Activated CD8-positive, alpha-beta T cell treated with anti-CD3 and anti-CD28 coated beads, Interleukin-2, amount 10 ng/mL, durations not matched to agents 7 days and 5 days (primary cell): ENCODE measurements at regions of chr15 and their contacts with region 1.

Region 1: GRCh38 chr15:85598718-85599398 is 195.9 kb downstream of the KLHL25 start:
- DNase-seq: no peak
- ATAC-seq: no peak
- H3K4me3 Mint-ChIP-seq: no peak overlapping the region
- H3K27ac Mint-ChIP-seq: no peak overlapping the region
- H3K4me1 Mint-ChIP-seq: peaks cover 43% of the 10 kb centered on the region
- H3K27me3 Mint-ChIP-seq: no peaks in the 10 kb centered on the region

Region 2: DNA sequence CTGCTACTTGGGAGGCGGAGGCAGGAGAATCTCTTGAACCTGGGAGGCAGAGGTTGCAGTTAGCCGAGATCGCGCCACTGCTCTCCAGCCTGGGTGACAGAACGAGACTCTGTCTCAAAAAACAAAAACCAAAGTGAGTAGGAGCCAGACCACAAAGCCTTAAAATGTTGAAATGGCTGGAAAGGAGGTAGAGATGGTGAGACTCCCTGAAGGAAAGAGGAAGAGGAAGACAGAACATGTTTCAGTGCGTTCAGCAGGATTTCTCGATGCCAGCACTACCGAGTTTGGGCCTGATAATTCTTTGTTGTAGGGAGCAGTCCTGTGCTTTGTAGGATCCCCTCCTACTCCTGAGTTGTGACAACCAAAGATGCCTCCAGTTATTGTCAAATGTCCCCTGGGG is 28.5 kb before region 1 on chr15:
- CTCF ChIA-PET with region 1: no interaction called
- POLR2A ChIA-PET with region 1: no interaction called
- DNase-seq: no peak
- ATAC-seq: no peak
- H3K4me3 Mint-ChIP-seq: no peak overlapping the region
- H3K27ac Mint-ChIP-seq: no peak overlapping the region
- H3K4me1 Mint-ChIP-seq: no peaks in the 10 kb centered on the region
- H3K27me3 Mint-ChIP-seq: no peaks in the 10 kb centered on the region

Region 3: GRCh38 chr15:85618956-85619491 is 20.2 kb after region 1 on chr15:
- CTCF ChIA-PET with region 1: interaction called, 13 read pairs
- POLR2A ChIA-PET with region 1: no interaction called
- DNase-seq: peak; percentile 59
- ATAC-seq: peak; percentile 84
- H3K4me3 Mint-ChIP-seq: no peak overlapping the region
- H3K27ac Mint-ChIP-seq: no peak overlapping the region
- H3K4me1 Mint-ChIP-seq: peaks cover 26% of the 10 kb centered on the region
- H3K27me3 Mint-ChIP-seq: no peaks in the 10 kb centered on the region